ENCODE measurements at regions of chr10 and their contacts with region 1.

Region 1: DNA sequence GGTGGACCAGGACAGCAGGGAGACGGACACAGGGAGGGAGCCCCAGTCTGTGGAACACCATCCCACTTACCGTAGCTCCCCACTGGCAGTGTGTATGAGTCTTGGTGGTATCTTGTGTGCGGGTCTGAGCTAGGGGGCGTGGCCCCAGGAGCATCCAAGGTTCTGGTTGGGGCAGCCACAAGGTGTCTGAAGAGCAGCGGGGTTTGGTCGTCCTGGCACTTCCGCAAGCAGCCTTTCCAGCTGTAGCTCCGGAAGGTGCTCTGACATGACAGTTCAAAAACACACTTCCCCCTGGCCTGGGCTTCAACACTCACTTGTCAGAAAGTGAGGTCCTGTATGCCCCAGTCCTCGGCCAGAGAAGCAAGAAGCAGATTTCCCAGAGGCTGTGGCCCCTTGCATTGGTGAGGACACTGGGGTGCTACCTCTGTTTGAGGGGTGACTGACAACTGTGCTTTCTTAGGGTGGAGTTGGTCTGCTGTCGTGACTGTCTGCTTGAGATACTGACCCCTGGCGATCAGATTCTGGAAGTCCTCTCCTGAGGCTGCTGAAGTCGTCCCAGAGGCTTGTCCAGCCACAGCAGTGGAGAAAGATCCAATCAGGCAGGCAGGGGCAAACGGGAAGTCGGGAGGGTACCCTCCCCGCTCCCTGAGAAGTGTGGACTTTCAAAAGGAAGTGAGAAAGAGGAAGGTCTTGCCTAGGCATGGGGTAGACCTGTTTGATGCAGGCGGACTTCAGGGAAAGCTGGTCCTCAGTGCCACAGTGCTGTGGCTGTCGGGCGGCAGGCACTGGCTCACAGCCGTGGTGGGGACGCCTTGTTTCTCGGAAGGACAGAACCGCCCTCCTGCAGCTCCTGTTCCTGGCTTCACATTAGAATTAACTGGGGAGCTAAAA is 51.4 kb upstream of the PFKFB3 start:
- DNase-seq: peak; percentile 50
- H3K4me3 Mint-ChIP-seq: peak overlapping the region; percentile 48
- H3K27ac Mint-ChIP-seq: peak overlapping the region; percentile 51
- H3K4me1 Mint-ChIP-seq: peaks cover 63% of the 10 kb centered on the region
- H3K27me3 Mint-ChIP-seq: no peaks in the 10 kb centered on the region

Region 2: GRCh38 chr10:6088721-6089390 is 62.5 kb before region 1 on chr10 and contains the start of gene RBM17:
- intact Hi-C with region 1: loop called (anchors 2 kb)
- DNase-seq: peak; percentile 98
- H3K4me3 Mint-ChIP-seq: peak within 1 kb of the TSS; percentile 95
- H3K27ac Mint-ChIP-seq: peak within 1 kb of the TSS; percentile 88
- H3K4me1 Mint-ChIP-seq: peaks cover 63% of the 10 kb centered on the region
- H3K27me3 Mint-ChIP-seq: no peaks in the 10 kb centered on the region
- total RNA-seq, gene RBM17: 265 and 283 TPM in 2 replicates

Region 3: GRCh38 chr10:6108603-6109443 is 42.5 kb before region 1 on chr10:
- intact Hi-C with region 1: loop called (anchors 1 kb)
- DNase-seq: peak; percentile 22
- H3K4me3 Mint-ChIP-seq: no peak overlapping the region
- H3K27ac Mint-ChIP-seq: peak overlapping the region; percentile 59
- H3K4me1 Mint-ChIP-seq: peaks cover 56% of the 10 kb centered on the region
- H3K27me3 Mint-ChIP-seq: no peaks in the 10 kb centered on the region

Measured in activated T-helper 1 cell treated with anti-CD3 and anti-CD28 coated beads, Interleukin-12 subunit alpha, Interleukin-12 subunit beta, Interleukin-2, Interleukin-4 antibody, amounts not matched to agents 30 ng/mL and 10 ng/mL and 1 ng/mL, durations not matched to agents 14 hours and 24 hours and 36 hours (primary cell).